Activated naive CD4-positive, alpha-beta T cell treated with anti-CD3 and anti-CD28 coated beads, Interleukin-2, amount 10 ng/mL, durations not matched to agents 7 days and 5 days (primary cell): ENCODE measurements at regions of chr3 and their contacts with region 1.

Region 1: DNA sequence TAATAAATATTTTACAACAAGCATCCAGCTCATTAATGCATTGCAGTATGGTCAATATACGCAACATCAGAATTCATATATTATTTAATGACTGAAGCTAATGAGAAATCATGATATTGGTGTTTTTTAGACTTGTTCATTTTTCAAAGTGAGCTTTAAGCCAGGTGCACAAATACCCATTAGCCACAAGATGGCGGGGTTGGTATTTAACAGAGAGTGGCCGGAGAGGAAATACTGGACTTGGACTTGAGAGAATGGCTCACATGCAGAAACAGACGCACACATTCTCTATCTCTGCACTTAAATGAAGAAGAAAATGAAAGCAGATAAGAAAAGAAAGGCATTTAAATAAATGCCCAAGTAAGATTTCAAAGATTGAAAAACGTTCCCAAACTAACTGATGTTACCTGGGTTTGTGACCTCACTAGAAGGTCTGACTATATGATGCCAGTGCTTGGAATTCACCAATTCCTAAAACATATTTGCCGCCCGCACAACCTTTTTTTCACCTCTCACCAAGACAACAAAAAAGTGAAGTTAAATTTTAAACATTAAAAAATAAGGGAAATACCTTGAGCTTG is 21.2 kb upstream of the CRBN start:
- DNase-seq: peak; percentile 44
- H3K4me3 Mint-ChIP-seq: no peak overlapping the region
- H3K27ac Mint-ChIP-seq: no peak overlapping the region
- H3K4me1 Mint-ChIP-seq: peaks cover 12% of the 10 kb centered on the region
- H3K27me3 Mint-ChIP-seq: no peaks in the 10 kb centered on the region

Region 2: GRCh38 chr3:3998140-3998922 is 797.6 kb after region 1 on chr3:
- CTCF ChIA-PET with region 1: interaction called, 74 read pairs
- DNase-seq: peak; percentile 38
- H3K4me3 Mint-ChIP-seq: no peak overlapping the region
- H3K27ac Mint-ChIP-seq: no peak overlapping the region
- H3K4me1 Mint-ChIP-seq: no peaks in the 10 kb centered on the region
- H3K27me3 Mint-ChIP-seq: no peaks in the 10 kb centered on the region

Region 3: DNA sequence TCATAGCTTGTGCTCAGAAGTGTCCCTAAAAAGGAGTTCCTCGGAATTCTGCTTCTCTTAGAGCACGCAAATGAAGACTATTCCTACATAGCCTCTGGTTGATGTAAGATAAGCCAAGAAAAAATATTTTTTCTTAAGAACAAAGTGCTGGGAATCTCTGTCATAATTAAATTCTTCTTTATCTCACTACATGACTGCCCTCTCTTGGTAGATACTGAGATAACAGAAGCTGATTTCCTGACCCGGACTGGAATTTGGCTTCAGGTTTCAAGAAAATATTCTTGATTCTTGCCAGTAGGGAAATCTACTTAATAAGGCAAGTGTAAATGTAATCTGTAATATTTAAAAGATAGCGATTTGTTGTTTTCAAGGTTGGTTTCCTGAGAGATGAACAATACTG is 1071.1 kb after region 1 on chr3:
- CTCF ChIA-PET with region 1: interaction called, 18 read pairs
- DNase-seq: no peak
- H3K4me3 Mint-ChIP-seq: no peak overlapping the region
- H3K27ac Mint-ChIP-seq: no peak overlapping the region
- H3K4me1 Mint-ChIP-seq: peaks cover 10% of the 10 kb centered on the region
- H3K27me3 Mint-ChIP-seq: no peaks in the 10 kb centered on the region